ENCODE measurements at regions of chr7 and their contacts with region 1.

Region 1: GRCh38 chr7:150715293-150715692 is 1.1 kb upstream of the GIMAP1 start:
- DNase-seq: no peak
- ATAC-seq: no peak

Region 2: GRCh38 chr7:150595361-150595760 is 119.9 kb before region 1 on chr7:
- intact Hi-C with region 1: no loop called
- DNase-seq: no peak
- ATAC-seq: no peak

Region 3: DNA sequence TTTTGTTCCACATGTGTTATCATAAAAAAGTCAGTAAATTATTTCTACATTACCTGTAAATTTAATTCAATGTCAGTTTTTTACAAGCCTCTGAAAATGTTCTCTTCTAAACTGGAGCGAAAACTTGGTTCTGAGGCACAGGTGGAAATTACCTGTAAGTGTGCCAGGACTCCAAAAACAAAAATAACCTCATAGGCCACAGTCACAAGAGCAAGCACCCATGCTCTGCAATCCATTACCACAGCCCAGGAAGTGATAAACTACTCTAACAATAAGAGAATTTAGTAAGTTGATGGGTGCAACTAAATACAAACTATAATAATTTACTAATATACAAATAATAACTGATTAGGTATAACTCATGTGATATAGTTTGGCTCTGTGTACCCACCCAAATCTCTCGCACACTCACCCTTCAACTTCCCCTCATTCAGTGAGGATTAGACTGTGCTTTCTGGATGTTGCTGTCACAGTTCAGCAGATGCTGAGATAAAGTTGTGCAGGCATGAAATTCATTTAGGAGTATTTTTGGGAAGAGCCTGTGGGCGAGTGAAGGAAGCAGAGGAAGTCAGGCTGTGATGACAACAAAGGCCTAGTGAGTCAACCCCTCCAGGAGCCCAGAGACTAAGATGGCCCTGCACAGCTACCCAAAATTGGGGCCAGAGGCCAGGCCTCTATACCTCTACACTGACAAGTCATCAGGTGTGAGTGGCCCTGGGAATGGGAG is 66.8 kb before region 1 on chr7:
- intact Hi-C with region 1: no loop called
- DNase-seq: no peak
- ATAC-seq: peak; percentile 20

Region 4: DNA sequence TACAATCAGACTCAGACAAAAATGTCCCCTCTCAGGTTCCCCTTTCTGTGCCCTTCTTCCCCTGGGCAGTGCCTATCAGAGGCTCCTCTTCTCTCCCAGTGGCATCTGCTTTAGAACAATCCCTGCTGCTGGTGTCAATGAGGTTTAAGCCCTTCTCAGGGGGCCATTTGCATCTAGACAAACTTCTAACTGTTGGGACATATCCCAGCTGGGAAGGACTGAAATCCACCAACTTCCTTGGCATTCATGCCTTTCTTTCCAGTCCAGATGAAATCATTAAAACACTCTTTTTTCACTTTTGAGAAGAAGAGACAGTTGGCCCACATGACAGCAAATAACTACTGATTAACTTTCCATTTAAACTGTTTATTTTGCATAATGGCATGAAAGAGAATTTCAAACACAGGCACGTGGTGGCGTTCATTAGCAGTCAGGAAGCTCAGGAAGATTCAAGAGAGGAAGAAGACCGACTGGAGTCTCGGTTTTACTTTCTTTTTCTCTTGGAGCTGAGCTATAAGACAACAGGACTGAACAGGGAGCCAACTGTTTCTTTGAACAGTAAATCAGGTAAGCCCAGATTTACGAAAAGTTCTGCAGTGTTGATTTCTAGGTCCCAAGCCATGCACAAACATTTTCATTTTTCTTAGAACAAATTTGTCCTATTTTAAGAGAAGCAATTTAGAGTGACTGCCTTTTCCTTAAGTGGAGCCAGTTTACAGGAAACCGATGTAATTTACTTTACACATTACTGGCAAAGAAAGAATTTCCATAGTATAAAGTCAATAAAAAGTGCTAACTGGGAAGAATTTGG is 29.9 kb before region 1 on chr7 and contains the start of gene GIMAP2:
- intact Hi-C with region 1: loop called (anchors 2 kb)
- DNase-seq: no peak
- ATAC-seq: peak; percentile 89
- total RNA-seq, gene GIMAP2: 4.7 TPM